ENCODE measurements at regions of chr18 and their contacts with region 1.

Region 1: GRCh38 chr18:72700961-72701718 is 157.0 kb upstream of the CBLN2 start:
- DNase-seq: peak in 1 of 2 experiments; percentile 45
- H3K4me3 ChIP-seq: no peak overlapping the region
- H3K27ac ChIP-seq: no peak overlapping the region
- H3K4me1 ChIP-seq: no peaks in the 10 kb centered on the region
- H3K27me3 ChIP-seq: no peaks in the 10 kb centered on the region
- CTCF ChIP-seq: peak; percentile 82

Region 2: GRCh38 chr18:72566290-72566689 is 134.8 kb before region 1 on chr18:
- CTCF ChIA-PET with region 1: no interaction called
- POLR2A ChIA-PET with region 1: no interaction called
- intact Hi-C with region 1: no loop called
- DNase-seq: no peak
- H3K4me3 ChIP-seq: no peak overlapping the region
- H3K27ac ChIP-seq: no peak overlapping the region
- H3K4me1 ChIP-seq: no peaks in the 10 kb centered on the region
- H3K27me3 ChIP-seq: no peaks in the 10 kb centered on the region; the same call in 1 of the 2 replicates
- CTCF ChIP-seq: no peak

Region 3: DNA sequence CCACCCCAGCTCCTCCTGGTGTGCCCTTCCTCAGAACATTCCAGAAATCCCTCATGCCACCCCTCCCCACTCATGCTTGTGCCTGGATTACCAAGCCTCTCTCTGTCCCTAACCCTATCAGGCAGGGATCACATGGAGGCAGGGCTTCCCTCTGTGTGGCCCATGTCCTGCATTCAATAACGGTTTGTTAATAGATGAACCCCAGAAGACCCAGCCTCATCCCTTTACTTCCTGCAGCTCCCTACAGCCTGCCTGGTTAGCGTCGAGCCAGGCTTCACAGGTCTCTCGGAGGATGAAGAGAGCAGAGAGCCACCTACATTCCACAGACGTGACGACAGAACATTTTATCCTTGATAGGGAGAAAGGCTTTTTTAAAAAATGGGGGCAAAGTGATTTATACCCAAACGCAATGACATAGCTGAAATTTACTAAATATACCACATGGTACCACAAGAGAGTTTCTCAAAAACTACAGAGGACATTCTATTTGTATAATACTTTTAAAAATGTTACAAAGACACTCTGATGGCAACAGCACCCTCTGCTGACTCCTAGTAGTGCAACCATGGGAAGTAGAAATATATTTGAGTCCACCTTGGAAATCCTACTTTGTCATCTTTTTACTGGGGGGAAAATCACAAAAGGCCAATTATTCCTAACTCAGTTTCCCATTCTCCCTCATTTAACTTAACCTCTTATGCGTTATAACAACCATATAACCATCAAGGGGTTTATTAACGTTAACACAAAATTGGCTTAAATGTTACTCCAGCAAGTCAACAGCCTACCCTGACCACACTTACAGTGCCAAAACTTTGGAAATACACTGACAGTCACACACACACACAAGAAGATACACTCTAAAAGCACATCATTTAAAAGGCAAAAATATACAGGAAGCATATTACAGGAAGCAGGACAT is 1415.8 kb after region 1 on chr18:
- CTCF ChIA-PET with region 1: no interaction called
- POLR2A ChIA-PET with region 1: no interaction called
- intact Hi-C with region 1: loop called (anchors 1 kb)
- DNase-seq: no peak
- H3K4me3 ChIP-seq: no peak overlapping the region
- H3K27ac ChIP-seq: no peak overlapping the region
- H3K4me1 ChIP-seq: no peaks in the 10 kb centered on the region
- H3K27me3 ChIP-seq: no peaks in the 10 kb centered on the region; the same call in 1 of the 2 replicates
- CTCF ChIP-seq: peak; percentile 86